ENCODE measurements at regions of chr1 and their contacts with region 1.

Region 1: GRCh38 chr1:37391211-37392011 is 83.0 kb upstream of the ZC3H12A start:
- DNase-seq: peak; percentile 46
- ATAC-seq: peak; percentile 32
- H3K4me3 Mint-ChIP-seq: no peak overlapping the region
- H3K27ac Mint-ChIP-seq: no peak overlapping the region
- H3K4me1 Mint-ChIP-seq: peaks cover 31% of the 10 kb centered on the region
- H3K27me3 Mint-ChIP-seq: no peaks in the 10 kb centered on the region
- CTCF ChIP-seq: no peak

Region 2: GRCh38 chr1:37354876-37355650 is 36.3 kb before region 1 on chr1:
- CTCF ChIA-PET with region 1: no interaction called
- POLR2A ChIA-PET with region 1: no interaction called
- DNase-seq: no peak
- ATAC-seq: no peak
- H3K4me3 Mint-ChIP-seq: no peak overlapping the region
- H3K27ac Mint-ChIP-seq: no peak overlapping the region
- H3K4me1 Mint-ChIP-seq: peaks cover 21% of the 10 kb centered on the region
- H3K27me3 Mint-ChIP-seq: peaks cover 3% of the 10 kb centered on the region
- CTCF ChIP-seq: no peak

Region 3: DNA sequence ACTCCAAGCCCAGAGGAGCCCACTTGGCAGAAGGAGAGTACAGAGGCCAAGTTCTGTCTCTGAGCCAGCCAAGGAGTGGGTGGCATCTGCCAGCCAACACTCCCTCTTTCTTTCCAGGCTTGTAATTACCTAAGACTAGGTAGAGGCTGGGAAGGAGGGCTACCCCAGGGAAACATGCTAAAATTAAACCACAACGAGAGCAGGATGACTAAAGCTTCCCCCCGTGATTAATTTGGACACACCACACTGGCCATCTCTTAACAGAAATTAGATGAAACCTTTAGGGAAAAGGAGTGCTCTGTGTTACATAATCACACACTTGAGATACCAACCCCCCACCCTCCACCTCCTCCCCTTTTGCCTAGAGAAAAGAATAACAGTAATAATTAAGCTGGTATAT is 19.1 kb before region 1 on chr1:
- CTCF ChIA-PET with region 1: no interaction called
- POLR2A ChIA-PET with region 1: no interaction called
- DNase-seq: no peak
- ATAC-seq: no peak
- H3K4me3 Mint-ChIP-seq: no peak overlapping the region
- H3K27ac Mint-ChIP-seq: no peak overlapping the region
- H3K4me1 Mint-ChIP-seq: no peaks in the 10 kb centered on the region
- H3K27me3 Mint-ChIP-seq: peaks cover 22% of the 10 kb centered on the region
- CTCF ChIP-seq: no peak

Region 4: DNA sequence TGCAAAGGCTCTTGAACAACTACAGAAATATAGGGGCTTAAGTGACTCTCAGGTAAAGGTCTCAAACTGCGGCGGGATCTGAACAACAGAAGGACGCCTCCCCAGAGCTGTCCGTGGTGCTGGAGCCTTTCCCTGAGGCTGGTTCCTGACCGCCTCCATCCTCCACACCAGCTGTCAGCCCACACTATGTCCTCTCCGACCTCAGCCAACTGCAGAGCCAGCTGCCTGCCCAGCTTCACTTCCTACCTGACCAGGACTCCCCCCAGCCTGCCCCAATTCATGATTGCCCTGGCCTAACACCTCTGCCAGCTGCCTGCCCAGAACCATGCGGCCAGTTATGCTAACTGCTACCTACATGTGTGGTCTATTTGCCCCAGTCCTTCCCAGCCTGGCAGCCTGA is 19.4 kb after region 1 on chr1:
- CTCF ChIA-PET with region 1: interaction called, 11 read pairs
- POLR2A ChIA-PET with region 1: no interaction called
- DNase-seq: peak; percentile 81
- ATAC-seq: peak; percentile 84
- H3K4me3 Mint-ChIP-seq: no peak overlapping the region
- H3K27ac Mint-ChIP-seq: no peak overlapping the region
- H3K4me1 Mint-ChIP-seq: peaks cover 14% of the 10 kb centered on the region
- H3K27me3 Mint-ChIP-seq: peaks cover 3% of the 10 kb centered on the region; the same call in 1 of the 2 replicates
- CTCF ChIP-seq: no peak

Region 5: GRCh38 chr1:37498872-37499617 is 107.6 kb after region 1 on chr1:
- CTCF ChIA-PET with region 1: no interaction called
- POLR2A ChIA-PET with region 1: no interaction called
- DNase-seq: no peak
- ATAC-seq: no peak
- H3K4me3 Mint-ChIP-seq: no peak overlapping the region
- H3K27ac Mint-ChIP-seq: no peak overlapping the region
- H3K4me1 Mint-ChIP-seq: no peaks in the 10 kb centered on the region
- H3K27me3 Mint-ChIP-seq: no peaks in the 10 kb centered on the region
- CTCF ChIP-seq: no peak

Measured in WTC11 (cell line).